Activated CD8-positive, alpha-beta memory T cell treated with anti-CD3 and anti-CD28 coated beads, Interleukin-2, amount 10 ng/mL, durations not matched to agents 7 days and 5 days (primary cell): ENCODE measurements at regions of chr2 and their contacts with region 1.

Region 1: DNA sequence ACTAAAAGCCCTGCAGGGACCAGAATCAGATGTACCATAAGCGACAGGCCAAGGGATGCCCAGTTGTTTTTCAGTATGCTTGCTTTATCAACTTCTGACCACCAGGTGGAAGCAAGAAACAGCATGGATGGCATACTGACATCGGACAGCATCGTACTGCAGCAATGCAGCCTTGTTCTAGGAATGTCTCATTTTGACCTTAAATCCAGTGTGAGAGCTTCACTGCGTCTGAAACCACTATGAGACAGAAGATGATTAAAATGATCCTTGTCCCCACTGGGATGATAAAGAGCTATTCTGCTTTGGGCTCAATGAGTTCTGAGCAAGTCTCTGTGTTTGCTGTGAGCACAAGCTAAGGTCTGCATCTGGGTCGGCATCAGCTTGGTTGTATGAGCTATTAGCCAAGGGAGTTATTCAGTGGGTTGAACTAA is 54.3 kb downstream of the CDK15 start:
- DNase-seq: peak; percentile 58
- ATAC-seq: peak; percentile 82
- H3K4me3 Mint-ChIP-seq: no peak overlapping the region
- H3K27ac Mint-ChIP-seq: no peak overlapping the region
- H3K4me1 Mint-ChIP-seq: peaks cover 12% of the 10 kb centered on the region
- H3K27me3 Mint-ChIP-seq: peaks cover 53% of the 10 kb centered on the region

Region 2: DNA sequence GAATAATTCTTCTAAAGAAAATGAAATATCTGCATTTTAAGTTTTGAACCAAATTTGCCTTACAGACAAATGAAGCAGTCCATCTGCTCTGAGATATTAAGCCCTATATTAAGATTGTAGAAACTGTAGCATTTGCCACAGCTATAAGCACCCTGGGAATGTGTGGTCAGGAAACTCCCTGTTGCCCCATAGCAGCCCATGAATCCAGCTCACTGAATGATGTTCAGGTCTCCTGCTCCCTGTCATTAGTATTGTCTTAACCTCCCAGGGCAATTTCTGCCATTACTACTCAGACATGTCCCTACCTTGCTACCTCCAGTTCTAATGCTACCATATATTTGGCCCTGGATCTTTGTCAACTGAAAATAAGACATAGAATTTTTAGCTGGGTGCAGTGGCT is 13.2 kb before region 1 on chr2:
- CTCF ChIA-PET with region 1: interaction called, 14 read pairs
- DNase-seq: no peak
- ATAC-seq: no peak
- H3K4me3 Mint-ChIP-seq: no peak overlapping the region
- H3K27ac Mint-ChIP-seq: no peak overlapping the region
- H3K4me1 Mint-ChIP-seq: no peaks in the 10 kb centered on the region
- H3K27me3 Mint-ChIP-seq: peaks cover 35% of the 10 kb centered on the region

Region 3: GRCh38 chr2:202178342-202178958 is 317.8 kb after region 1 on chr2:
- CTCF ChIA-PET with region 1: interaction called, 34 read pairs
- DNase-seq: peak; percentile 64
- ATAC-seq: peak; percentile 72
- H3K4me3 Mint-ChIP-seq: no peak overlapping the region
- H3K27ac Mint-ChIP-seq: no peak overlapping the region
- H3K4me1 Mint-ChIP-seq: peaks cover under 1% of the 10 kb centered on the region
- H3K27me3 Mint-ChIP-seq: peaks cover 20% of the 10 kb centered on the region